ENCODE measurements at regions of chr6 and their contacts with region 1.

Region 1: DNA sequence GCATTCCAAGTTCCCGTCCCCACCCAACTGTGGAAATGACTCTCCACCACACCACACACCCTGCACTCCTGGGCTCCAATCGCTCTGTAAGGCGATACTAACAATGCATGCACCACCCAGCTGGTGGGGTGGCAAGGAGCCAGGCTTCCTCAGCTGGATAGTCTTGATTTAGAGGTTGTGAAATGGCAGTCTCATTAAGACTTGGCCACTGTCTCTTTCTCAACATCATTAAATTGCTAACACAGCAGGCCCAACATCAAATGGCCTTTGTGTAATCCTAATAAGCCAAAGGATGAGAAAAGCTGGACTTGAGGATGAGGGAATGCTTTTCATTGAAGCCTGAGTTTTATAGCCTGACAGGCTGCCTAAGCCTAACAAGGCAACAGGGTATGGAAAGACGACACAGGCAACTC is 223.7 kb downstream of the GMDS start:
- DNase-seq: peak; percentile 76

Region 2: DNA sequence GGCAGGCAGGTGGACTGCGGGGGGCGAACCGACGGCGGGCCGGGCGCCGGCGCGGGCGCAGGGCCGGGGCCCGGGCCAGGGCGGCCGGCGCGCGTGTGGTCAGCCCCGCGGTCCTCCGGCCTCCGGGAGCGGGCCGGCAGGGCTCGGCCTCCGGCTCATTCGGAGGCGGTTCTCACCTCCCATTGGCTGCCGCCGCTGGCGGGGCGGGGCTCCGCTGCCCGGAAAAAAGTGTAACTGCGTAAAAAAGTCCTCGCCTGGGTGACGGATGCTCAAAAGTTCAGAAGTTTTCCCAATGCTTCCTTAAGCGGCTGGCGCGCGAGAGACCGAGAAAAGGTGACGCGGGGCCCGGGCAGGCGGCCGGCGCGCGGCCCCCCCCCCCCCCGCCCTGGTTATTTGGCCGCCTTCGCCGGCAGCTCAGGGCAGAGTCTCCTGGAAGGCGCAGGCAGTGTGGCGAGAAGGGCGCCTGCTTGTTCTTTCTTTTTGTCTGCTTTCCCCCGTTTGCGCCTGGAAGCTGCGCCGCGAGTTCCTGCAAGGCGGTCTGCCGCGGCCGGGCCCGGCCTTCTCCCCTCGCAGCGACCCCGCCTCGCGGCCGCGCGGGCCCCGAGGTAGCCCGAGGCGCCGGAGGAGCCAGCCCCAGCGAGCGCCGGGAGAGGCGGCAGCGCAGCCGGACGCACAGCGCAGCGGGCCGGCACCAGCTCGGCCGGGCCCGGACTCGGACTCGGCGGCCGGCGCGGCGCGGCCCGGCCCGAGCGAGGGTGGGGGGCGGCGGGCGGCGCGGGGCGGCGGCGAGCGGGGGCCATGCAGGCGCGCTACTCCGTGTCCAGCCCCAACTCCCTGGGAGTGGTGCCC is 411.8 kb before region 1 on chr6 and contains the start of gene FOXC1:
- intact Hi-C with region 1: loop called (anchors 10 kb)
- DNase-seq: peak; percentile 95
- total RNA-seq, gene FOXC1: 6.4 TPM

Region 3: GRCh38 chr6:1832836-1833787 is 188.6 kb before region 1 on chr6:
- intact Hi-C with region 1: loop called (anchors 10 kb)
- DNase-seq: no peak

Region 4: GRCh38 chr6:2166717-2167116 is 145.0 kb after region 1 on chr6:
- intact Hi-C with region 1: no loop called
- DNase-seq: no peak